T-cell (primary cell): ENCODE measurements at regions of chr16 and their contacts with region 1.

Region 1: DNA sequence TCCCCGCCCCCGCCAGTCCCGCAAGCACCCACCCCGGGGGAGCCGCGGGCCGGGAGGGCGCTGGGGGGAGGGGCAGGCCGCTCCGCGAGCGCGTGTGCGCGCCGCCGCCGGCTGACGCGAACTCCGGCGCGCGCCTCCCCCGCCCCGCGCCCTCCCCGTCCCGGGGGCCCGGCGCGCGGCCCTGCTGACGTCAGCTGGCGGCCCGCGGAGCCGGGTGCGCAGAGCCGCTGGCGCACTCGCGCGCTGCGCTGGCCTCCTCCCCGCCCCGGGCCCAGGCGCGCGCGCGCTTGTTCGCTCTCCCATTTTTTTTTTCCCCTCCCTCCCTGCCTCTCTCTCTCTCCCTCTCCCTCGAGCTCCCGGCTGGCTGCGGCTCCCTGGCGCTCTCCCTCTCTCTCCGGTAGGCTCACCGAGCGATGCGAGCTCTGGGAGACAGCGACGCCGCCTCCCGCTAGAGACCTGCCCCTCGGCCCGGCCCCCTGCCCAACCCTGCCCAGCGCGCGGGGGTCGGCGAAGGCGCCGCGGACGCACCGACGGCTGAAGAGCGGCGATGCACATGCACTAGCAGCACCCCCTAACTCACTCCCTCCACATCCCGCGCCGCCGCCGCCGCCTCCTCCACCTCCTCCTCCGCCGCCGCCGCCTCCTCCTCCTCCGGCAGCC is at the start of gene GNAO1:
- DNase-seq: peak in 33 of 35 experiments; percentile 14 to 88 (median 43)
- ATAC-seq: peak; percentile 75 to 81 (median 80)
- H3K4me3 ChIP-seq: peak within 1 kb of the TSS; percentile 61 to 74
- H3K4me3 Mint-ChIP-seq: peak within 1 kb of the TSS; percentile 77 to 79 (median 77)
- H3K27ac ChIP-seq: peak within 1 kb of the TSS; percentile 11
- H3K27ac Mint-ChIP-seq: peak within 1 kb of the TSS in 1 of 2 donors; percentile 25
- H3K4me1 ChIP-seq: peaks cover 12 to 39% of the 10 kb centered on the region in 2 experiments
- H3K4me1 Mint-ChIP-seq: peaks cover 18 to 35% (median 31%) of the 10 kb centered on the region in 3 donors
- H3K27me3 ChIP-seq: peaks cover 19 to 33% of the 10 kb centered on the region in 2 experiments
- H3K27me3 Mint-ChIP-seq: peaks cover 26 to 35% of the 10 kb centered on the region in 2 donors
- total RNA-seq, gene GNAO1: 3.9 to 14.2 (median 12.6) TPM

Region 2: GRCh38 chr16:55701442-55702319 is 489.6 kb before region 1 on chr16:
- CTCF ChIA-PET with region 1: interaction called in 1 of 2 experiments, 10 read pairs
- POLR2A ChIA-PET with region 1: no interaction called
- DNase-seq: peak in 23 of 35 experiments; percentile 4 to 42 (median 15)
- ATAC-seq: peak in 1 of 4 experiments; percentile 40
- H3K4me3 ChIP-seq: no peak overlapping the region
- H3K4me3 Mint-ChIP-seq: no peak overlapping the region
- H3K27ac ChIP-seq: no peak overlapping the region
- H3K27ac Mint-ChIP-seq: no peak overlapping the region
- H3K4me1 ChIP-seq: no peaks in the 10 kb centered on the region
- H3K4me1 Mint-ChIP-seq: peaks cover 0 to 6% (median 3%) of the 10 kb centered on the region in 3 donors
- H3K27me3 ChIP-seq: peaks cover 0 to 19% of the 10 kb centered on the region in 2 experiments
- H3K27me3 Mint-ChIP-seq: peaks cover 0 to 11% of the 10 kb centered on the region in 2 donors

Region 3: DNA sequence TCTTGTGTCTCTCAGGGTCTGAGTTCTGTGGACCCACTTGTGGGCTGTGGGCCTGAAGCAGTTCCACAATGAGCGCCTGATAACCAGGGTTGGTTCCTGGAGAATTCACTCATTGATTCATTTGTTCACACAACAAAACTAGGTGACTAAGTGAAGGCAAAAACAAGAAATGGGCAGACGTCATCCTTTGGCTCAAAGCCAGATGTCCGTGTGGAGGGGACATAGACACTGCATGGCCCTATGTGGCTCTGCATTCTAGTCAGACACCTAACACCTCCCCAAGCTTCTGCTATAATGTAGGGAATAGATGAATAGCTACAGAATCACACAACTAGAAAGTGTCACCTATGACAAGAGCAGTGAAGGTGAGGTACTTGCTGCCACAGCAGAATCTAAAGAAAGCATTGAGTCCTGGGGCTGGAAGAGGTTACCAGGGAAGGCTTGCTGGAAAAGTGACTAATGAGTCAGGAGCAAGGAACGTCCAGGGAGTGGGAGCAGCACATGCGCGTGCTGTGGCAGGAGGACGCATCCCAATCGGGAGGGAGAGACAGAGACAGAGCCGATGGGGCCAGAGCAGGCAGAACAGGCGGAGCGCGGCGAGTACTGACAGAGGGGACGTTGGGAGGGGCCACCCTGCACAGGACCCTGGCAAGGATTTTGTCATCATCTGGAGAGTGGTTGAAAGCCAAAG is 417.3 kb before region 1 on chr16:
- CTCF ChIA-PET with region 1: no interaction called
- POLR2A ChIA-PET with region 1: no interaction called
- DNase-seq: no peak
- ATAC-seq: no peak
- H3K4me3 ChIP-seq: no peak overlapping the region
- H3K4me3 Mint-ChIP-seq: no peak overlapping the region
- H3K27ac ChIP-seq: no peak overlapping the region
- H3K27ac Mint-ChIP-seq: no peak overlapping the region
- H3K4me1 ChIP-seq: no peaks in the 10 kb centered on the region
- H3K4me1 Mint-ChIP-seq: no peaks in the 10 kb centered on the region
- H3K27me3 ChIP-seq: peaks cover 0 to 14% of the 10 kb centered on the region in 2 experiments
- H3K27me3 Mint-ChIP-seq: peaks cover 5 to 20% of the 10 kb centered on the region in 2 donors

Region 4: GRCh38 chr16:56269811-56270684 is 78.8 kb after region 1 on chr16:
- CTCF ChIA-PET with region 1: interaction called in 1 of 2 experiments, 10 read pairs
- POLR2A ChIA-PET with region 1: no interaction called
- DNase-seq: no peak
- ATAC-seq: no peak
- H3K4me3 ChIP-seq: no peak overlapping the region
- H3K4me3 Mint-ChIP-seq: no peak overlapping the region
- H3K27ac ChIP-seq: no peak overlapping the region
- H3K27ac Mint-ChIP-seq: no peak overlapping the region
- H3K4me1 ChIP-seq: peaks cover 0 to 3% of the 10 kb centered on the region in 2 experiments
- H3K4me1 Mint-ChIP-seq: peaks cover 2 to 6% (median 4%) of the 10 kb centered on the region in 3 donors
- H3K27me3 ChIP-seq: peaks cover 0 to 3% of the 10 kb centered on the region in 2 experiments
- H3K27me3 Mint-ChIP-seq: peaks cover 0 to 12% of the 10 kb centered on the region in 2 donors

Region 5: GRCh38 chr16:56436258-56436657 is 245.0 kb after region 1 on chr16:
- CTCF ChIA-PET with region 1: no interaction called
- POLR2A ChIA-PET with region 1: no interaction called
- DNase-seq: no peak
- ATAC-seq: no peak
- H3K4me3 ChIP-seq: no peak overlapping the region
- H3K4me3 Mint-ChIP-seq: no peak overlapping the region
- H3K27ac ChIP-seq: no peak overlapping the region
- H3K27ac Mint-ChIP-seq: no peak overlapping the region
- H3K4me1 ChIP-seq: no peaks in the 10 kb centered on the region
- H3K4me1 Mint-ChIP-seq: peaks cover 0 to 2% (median 2%) of the 10 kb centered on the region in 3 donors
- H3K27me3 ChIP-seq: no peaks in the 10 kb centered on the region
- H3K27me3 Mint-ChIP-seq: no peaks in the 10 kb centered on the region